ENCODE measurements at regions of chr18 and their contacts with region 1.

Region 1: DNA sequence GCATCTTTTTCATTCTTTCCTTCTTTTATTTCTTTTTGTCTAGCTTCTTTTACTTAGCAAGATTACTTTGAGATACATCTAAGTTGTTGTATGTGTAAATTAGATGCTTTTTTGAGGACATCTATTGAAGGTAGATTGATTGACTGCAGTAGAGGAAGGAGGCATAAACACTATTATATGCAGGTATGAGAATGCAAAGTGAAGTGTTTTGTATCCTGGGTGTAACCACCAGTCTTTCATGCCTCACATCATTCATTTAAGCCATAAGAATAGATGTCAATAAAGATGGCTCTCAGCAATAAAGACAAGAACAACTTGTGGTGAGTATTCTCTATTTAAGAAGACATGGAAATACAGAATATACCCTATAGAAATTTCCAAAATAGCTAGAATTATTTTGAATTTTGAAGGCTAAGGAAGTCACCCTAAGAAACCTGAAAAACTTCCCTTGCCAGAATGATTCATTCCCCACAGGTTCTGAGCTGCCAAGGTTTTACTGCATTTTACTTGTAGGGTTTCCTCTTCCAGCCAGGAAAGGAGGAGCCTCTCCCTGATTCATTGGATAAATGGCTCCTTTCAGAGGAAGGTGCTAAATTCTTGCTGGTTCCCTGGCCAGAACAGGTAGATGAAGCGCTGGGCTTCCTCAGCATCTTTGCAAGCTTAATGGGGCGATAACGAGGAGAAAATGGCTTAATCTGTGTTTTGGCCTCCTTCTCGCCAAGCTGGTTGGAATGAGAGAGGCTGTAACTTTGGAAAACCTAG is 279.8 kb upstream of the SLC14A2 start:
- DNase-seq: no peak
- ATAC-seq: peak in 1 of 4 donors; percentile 36
- H3K4me3 ChIP-seq: no peak overlapping the region
- H3K27ac ChIP-seq: no peak overlapping the region
- H3K4me1 ChIP-seq: peaks cover 59% of the 10 kb centered on the region
- H3K27me3 ChIP-seq: no peaks in the 10 kb centered on the region
- CTCF ChIP-seq: no peak

Region 2: GRCh38 chr18:45136381-45137086 is 198.9 kb before region 1 on chr18:
- intact Hi-C with region 1: no loop called
- DNase-seq: no peak
- ATAC-seq: no peak
- H3K4me3 ChIP-seq: no peak overlapping the region
- H3K27ac ChIP-seq: no peak overlapping the region
- H3K4me1 ChIP-seq: no peaks in the 10 kb centered on the region
- H3K27me3 ChIP-seq: no peaks in the 10 kb centered on the region
- CTCF ChIP-seq: no peak

Region 3: DNA sequence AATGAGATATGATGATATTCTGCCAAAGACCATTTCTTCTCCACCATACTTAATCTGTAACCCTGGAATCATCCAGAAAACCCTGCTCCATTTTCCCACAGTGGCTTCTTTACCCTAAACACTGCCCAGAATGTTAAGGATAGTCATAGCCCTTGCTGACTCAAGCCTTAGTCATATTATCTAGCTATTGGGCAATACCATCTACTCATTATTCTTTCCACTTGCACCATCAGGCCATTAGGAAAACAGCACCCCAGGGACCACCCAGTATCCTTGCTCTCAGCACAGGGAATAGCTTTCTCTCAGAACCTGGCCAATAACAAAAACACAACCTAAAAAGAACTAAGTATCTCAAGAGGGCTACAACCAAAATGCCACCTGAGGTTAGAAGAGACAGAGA is 165.9 kb before region 1 on chr18:
- intact Hi-C with region 1: loop called in 1 of 2 experiments (anchors 10 kb)
- DNase-seq: peak; percentile 61 to 72
- ATAC-seq: peak; percentile 56 to 63 (median 59)
- H3K4me3 ChIP-seq: no peak overlapping the region
- H3K27ac ChIP-seq: peak overlapping the region; percentile 0
- H3K4me1 ChIP-seq: peaks cover 42% of the 10 kb centered on the region
- H3K27me3 ChIP-seq: no peaks in the 10 kb centered on the region
- CTCF ChIP-seq: no peak

Region 4: GRCh38 chr18:45245091-45245561 is 90.3 kb before region 1 on chr18:
- intact Hi-C with region 1: no loop called
- DNase-seq: no peak
- ATAC-seq: peak in 2 of 4 donors; percentile 28
- H3K4me3 ChIP-seq: no peak overlapping the region
- H3K27ac ChIP-seq: no peak overlapping the region
- H3K4me1 ChIP-seq: peaks cover 28% of the 10 kb centered on the region
- H3K27me3 ChIP-seq: no peaks in the 10 kb centered on the region
- CTCF ChIP-seq: no peak

Measured in psoas muscle (tissue), 8 donors.